ENCODE measurements at regions of chr2 and their contacts with region 1.

Region 1: GRCh38 chr2:85707304-85707703 is 13.1 kb downstream of the GNLY start:
- DNase-seq: peak; percentile 95
- H3K4me3 Mint-ChIP-seq: peak overlapping the region; percentile 36
- H3K27ac Mint-ChIP-seq: peak overlapping the region; percentile 94
- H3K4me1 Mint-ChIP-seq: peaks cover 56% of the 10 kb centered on the region
- H3K27me3 Mint-ChIP-seq: no peaks in the 10 kb centered on the region
- CTCF ChIP-seq: peak; percentile 65

Region 2: GRCh38 chr2:85635636-85636035 is 71.7 kb before region 1 on chr2:
- CTCF ChIA-PET with region 1: interaction called, 98 read pairs
- POLR2A ChIA-PET with region 1: interaction called, 8 read pairs
- intact Hi-C with region 1: loop called (anchors 1 kb)
- DNase-seq: no peak
- H3K4me3 Mint-ChIP-seq: no peak overlapping the region
- H3K27ac Mint-ChIP-seq: peak overlapping the region; percentile 28
- H3K4me1 Mint-ChIP-seq: peaks cover 13% of the 10 kb centered on the region
- H3K27me3 Mint-ChIP-seq: no peaks in the 10 kb centered on the region
- CTCF ChIP-seq: no peak

Region 3: DNA sequence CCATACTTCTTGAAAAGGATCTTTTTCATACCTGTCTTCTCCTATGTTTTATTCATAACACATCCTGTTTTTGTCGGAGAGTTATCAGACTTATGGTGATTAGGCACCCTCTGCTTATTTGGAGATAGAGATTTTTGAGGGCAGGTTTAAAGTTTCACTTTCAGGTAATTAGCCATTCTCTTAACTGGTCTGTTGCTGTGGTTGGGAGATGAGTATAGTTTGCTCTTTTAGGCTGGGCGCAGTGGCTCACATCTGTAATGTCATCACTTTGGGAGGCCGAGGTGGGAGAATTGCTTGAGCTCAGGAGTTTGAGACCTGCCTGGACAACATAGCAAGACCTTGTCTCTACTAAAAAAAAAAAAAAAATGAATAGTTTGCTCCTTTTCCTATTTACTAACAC is 64.6 kb before region 1 on chr2:
- CTCF ChIA-PET with region 1: interaction called, 98 read pairs
- POLR2A ChIA-PET with region 1: interaction called, 8 read pairs
- intact Hi-C with region 1: loop called (anchors 1 kb)
- DNase-seq: no peak
- H3K4me3 Mint-ChIP-seq: no peak overlapping the region
- H3K27ac Mint-ChIP-seq: no peak overlapping the region
- H3K4me1 Mint-ChIP-seq: no peaks in the 10 kb centered on the region
- H3K27me3 Mint-ChIP-seq: no peaks in the 10 kb centered on the region
- CTCF ChIP-seq: no peak

Region 4: GRCh38 chr2:85648619-85649018 is 58.7 kb before region 1 on chr2:
- CTCF ChIA-PET with region 1: interaction called, 8 read pairs
- POLR2A ChIA-PET with region 1: interaction called, 4 read pairs
- intact Hi-C with region 1: loop called (anchors 1 kb)
- DNase-seq: peak; percentile 69
- H3K4me3 Mint-ChIP-seq: no peak overlapping the region
- H3K27ac Mint-ChIP-seq: peak overlapping the region; percentile 18
- H3K4me1 Mint-ChIP-seq: peaks cover 10% of the 10 kb centered on the region
- H3K27me3 Mint-ChIP-seq: no peaks in the 10 kb centered on the region
- CTCF ChIP-seq: peak; percentile 20

Region 5: DNA sequence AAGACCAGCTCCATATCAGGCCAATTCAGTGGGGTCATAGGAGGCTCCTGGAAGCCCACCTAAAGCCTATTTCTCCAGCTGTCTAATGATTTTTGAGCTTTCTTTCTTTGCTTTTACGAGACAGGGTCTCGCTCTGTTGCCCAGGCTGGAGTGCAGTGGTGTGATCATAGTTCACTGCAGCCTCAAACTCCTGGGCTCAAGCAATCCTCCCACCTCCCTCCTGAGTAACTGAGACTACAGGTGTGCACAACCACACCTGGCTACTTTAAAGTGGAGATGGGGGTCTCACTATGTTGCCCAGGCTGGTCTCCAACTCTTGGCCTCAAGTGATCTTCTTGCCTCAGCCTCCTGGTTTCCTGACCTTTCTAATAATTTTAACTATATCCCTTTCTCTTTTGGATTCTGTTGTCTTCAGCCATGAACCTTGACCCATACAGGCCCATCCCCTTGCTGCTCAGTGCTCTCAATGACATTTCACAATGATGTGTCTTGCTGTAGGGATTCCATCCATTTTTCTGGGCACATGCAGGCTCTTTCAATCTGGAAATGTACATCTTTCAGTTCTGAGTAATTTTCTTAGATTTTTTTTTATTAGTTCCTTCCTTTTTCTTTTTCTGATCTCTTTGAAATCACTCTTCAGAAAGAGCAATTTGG is 16.5 kb after region 1 on chr2:
- CTCF ChIA-PET with region 1: interaction called, 43 read pairs
- POLR2A ChIA-PET with region 1: interaction called, 12 read pairs
- intact Hi-C with region 1: no loop called
- DNase-seq: no peak
- H3K4me3 Mint-ChIP-seq: no peak overlapping the region
- H3K27ac Mint-ChIP-seq: peak overlapping the region; percentile 1
- H3K4me1 Mint-ChIP-seq: no peaks in the 10 kb centered on the region
- H3K27me3 Mint-ChIP-seq: no peaks in the 10 kb centered on the region
- CTCF ChIP-seq: no peak